ENCODE measurements at regions of chrX and their contacts with region 1.

Region 1: DNA sequence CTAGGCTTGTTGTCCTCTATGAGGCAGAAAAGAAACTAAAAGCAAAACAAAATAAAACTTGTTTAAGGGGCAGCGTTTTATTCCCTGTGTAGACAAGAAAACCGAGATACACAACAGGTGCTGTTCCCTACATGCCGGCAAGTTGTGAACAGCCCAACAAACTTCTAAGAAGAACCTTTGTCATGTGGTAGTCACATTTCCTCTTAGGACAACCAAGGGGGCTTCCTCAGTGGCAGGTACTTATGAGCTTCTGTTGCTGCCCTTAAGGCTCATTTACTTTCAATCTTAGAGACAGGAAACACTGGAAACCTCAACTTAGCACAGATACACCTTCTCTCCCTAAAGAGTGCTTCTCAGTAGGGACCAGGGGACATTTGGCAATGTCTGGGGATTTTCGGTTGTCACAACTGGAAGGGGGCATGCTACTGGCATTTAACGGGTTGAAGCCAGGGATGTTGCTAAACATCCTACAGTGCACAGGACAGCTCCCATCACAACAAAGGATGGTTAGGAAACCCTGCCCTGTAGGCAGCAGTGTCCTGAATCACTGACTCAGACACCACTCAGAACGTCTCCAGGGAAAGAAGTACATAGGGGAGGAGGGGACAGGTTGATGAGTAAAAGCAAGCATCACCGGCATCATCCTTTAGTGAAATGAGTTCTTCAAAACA is 111.0 kb downstream of the ASB9 start:
- DNase-seq: peak; percentile 51
- H3K4me3 Mint-ChIP-seq: peak overlapping the region; percentile 57
- H3K27ac Mint-ChIP-seq: peak overlapping the region; percentile 70
- H3K4me1 Mint-ChIP-seq: peaks cover 34% of the 10 kb centered on the region
- H3K27me3 Mint-ChIP-seq: peaks cover 2% of the 10 kb centered on the region

Region 2: GRCh38 chrX:14798805-14799397 is 360.0 kb before region 1 on chrX:
- CTCF ChIA-PET with region 1: no interaction called
- POLR2A ChIA-PET with region 1: no interaction called
- intact Hi-C with region 1: loop called (anchors 5 kb)
- DNase-seq: peak; percentile 12
- H3K4me3 Mint-ChIP-seq: no peak overlapping the region
- H3K27ac Mint-ChIP-seq: no peak overlapping the region
- H3K4me1 Mint-ChIP-seq: peaks cover 18% of the 10 kb centered on the region
- H3K27me3 Mint-ChIP-seq: peaks cover 2% of the 10 kb centered on the region